ENCODE measurements at regions of chr22 and their contacts with region 1.

Region 1: GRCh38 chr22:41403532-41404318 is 22.0 kb downstream of the TEF start:
- DNase-seq: peak; percentile 89

Region 2: DNA sequence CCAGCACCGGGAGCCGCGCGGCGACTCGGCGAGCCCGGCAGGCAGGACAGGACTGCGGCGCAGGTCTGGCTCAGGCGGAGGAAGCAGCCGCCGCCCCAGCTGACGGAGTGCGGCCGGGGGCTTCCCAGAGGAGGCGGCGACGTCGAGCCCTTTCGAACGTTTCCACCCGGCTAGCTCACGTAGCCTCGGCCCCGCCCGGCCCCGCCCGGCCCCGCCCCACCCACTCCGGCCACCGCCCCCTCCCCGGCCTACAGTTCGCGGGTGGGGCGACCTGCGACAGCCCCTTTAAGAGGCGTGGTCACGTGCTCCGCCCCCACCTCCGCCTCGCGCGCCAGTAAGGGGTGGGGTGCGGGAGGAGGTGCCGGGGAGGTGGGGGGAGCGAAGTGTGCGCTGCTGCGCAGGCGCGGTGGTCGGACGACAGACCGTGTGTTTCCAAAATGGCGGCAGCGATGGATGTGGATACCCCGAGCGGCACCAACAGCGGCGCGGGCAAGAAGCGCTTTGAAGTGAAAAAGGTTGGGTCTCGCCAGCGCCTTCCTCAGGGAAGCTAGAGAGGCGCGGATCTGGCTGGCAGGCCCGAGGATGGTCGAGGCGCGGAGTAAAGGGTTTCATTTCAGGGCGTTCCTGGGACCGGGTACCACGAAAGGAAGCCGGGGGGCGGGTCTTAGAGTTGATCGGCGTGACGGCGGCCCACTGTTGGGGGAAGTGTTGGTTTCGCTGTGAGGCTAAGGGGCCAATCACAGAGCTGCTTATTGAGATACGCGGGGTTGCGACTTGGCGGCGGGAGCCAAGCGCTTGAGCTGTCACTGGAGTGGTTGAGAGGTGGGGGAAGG is 452.5 kb before region 1 on chr22 and contains the start of gene RBX1:
- in situ Hi-C with region 1: no loop called
- DNase-seq: peak; percentile 98

Region 3: DNA sequence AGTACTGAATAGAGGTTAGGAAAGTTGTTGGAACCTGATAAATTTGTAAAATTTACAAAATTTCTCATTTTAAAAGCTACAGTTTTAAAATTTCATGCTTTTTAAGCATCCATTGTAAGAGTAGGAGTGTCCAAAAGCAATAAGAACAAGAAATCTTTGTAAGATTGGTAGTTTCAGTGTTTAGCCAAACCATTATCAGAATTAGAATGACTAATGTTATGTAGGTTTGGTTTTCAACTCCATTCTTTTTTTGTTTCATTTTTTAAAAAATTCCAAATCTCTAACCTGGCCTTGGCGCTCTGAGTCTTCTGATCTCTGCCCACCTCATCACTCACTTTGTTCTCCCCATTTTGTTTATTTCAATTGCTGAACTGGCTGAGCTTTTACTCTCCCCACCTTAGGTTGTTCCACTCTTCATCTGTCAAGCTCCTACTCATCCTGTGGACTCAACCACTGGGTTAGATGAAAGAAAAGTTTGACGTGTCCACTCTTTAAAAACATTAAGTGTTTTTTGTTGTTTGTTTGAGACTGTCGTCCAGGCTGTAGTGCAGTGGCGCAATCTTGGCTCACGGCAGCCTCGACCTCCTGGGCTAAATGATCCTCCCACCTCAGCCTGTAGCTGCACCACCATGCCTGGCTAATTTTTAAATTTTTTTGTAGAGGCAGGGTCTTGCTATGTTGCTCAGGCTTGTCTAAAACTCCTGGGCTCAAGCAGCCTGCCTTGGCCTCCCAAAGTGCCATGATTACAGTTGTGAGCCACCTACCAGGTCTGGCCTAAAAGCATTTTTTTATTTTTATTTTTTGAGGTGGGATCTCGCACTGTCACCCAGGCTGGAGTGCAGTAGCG is 297.4 kb before region 1 on chr22:
- in situ Hi-C with region 1: no loop called
- DNase-seq: no peak

Region 4: DNA sequence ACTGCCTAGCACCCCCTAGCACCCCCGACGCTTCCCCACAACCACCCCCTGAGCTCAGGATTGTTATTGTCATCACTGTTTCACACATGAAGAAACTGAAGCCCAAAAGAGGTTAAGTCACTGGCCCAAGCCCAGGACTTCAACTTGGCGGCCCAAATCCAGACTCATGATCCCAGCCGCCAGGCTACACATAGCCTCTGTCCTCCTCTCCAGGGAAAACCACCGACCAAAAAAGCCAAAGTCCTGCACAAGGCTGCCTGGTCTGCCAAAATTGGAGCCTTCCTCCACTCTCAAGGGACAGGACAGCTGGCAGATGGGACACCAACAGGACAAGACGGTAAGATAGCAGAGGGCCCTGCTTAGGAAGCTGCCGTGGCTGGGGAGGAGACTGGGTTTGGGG is 187.8 kb before region 1 on chr22:
- in situ Hi-C with region 1: no loop called
- DNase-seq: no peak

Region 5: GRCh38 chr22:41491374-41492100 is 87.8 kb after region 1 on chr22:
- in situ Hi-C with region 1: no loop called
- DNase-seq: no peak

Region 6: DNA sequence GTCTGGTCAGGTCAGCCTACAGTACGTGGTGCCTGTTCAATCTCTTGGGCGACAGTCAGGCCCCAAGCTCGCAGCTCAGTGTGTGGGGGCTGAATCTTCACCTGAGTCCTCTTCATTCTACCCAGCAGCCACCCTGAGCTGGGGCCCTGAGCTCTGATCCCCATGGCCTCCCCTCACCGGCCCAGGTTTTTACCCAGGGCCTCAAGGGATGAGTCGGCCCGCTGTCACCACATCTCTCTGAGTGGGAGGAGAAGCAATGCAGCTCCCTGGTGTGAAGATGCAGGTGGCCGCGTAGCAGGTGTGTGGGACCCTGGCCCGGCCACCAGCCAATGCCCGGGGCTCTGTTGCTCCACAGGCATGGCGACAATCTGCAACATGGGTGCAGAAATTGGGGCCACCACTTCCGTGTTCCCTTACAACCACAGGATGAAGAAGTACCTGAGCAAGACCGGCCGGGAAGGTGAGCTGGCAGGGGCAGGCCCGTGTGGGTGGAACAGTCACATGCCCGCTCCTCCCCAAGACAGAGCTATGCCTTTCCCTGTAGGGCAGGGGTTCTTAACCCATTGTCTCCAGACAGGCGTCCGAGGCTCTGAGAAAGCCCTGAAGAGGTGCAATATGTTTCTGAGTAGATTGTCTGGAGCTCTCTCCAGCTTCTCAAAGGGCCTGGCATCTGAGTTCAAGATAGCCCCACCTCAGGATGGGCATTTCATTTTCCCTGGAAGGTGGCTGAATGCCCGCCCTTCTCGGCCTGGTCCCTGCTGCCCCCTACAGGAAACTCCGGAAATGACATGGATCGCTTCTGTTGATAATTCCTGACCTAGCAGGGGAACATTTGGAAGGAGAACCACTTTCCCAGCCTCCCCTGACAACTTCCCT is 113.7 kb after region 1 on chr22:
- in situ Hi-C with region 1: loop called (anchors 10 kb)
- DNase-seq: peak; percentile 57